Breast epithelium (tissue), 4 donors: ENCODE measurements at regions of chr15 and their contacts with region 1.

Region 1: GRCh38 chr15:88126695-88127431 is 129.7 kb downstream of the NTRK3 start:
- DNase-seq: no peak
- H3K4me3 ChIP-seq: no peak overlapping the region
- H3K27ac ChIP-seq: peak overlapping the region in 1 of 2 donors; percentile 74
- H3K4me1 ChIP-seq: no peaks in the 10 kb centered on the region
- H3K27me3 ChIP-seq: no peaks in the 10 kb centered on the region
- CTCF ChIP-seq: no peak
- POLR2A ChIP-seq: no peak

Region 2: DNA sequence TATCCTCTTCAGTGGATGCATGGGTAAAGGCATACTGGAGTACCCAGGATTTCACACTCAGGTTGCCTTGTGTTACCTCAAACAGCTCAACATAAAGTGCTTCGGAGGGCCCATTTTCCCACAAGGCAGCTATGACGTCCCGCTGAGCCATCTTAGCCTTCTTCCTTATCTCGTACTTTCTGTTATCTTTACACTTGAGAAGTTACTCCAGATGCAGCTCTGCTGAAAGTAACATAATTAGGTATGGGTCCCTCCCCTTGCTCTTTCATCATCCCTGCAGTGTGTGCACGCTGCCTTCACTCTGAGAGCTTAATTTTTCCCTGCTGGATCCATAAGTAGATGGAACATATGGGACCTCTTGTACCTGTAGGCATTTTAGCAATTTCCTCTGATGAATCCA is 1636.9 kb before region 1 on chr15:
- intact Hi-C with region 1: loop called (anchors 10 kb)
- DNase-seq: no peak
- H3K4me3 ChIP-seq: no peak overlapping the region
- H3K27ac ChIP-seq: no peak overlapping the region
- H3K4me1 ChIP-seq: no peaks in the 10 kb centered on the region
- H3K27me3 ChIP-seq: no peaks in the 10 kb centered on the region
- CTCF ChIP-seq: no peak
- POLR2A ChIP-seq: no peak

Region 3: DNA sequence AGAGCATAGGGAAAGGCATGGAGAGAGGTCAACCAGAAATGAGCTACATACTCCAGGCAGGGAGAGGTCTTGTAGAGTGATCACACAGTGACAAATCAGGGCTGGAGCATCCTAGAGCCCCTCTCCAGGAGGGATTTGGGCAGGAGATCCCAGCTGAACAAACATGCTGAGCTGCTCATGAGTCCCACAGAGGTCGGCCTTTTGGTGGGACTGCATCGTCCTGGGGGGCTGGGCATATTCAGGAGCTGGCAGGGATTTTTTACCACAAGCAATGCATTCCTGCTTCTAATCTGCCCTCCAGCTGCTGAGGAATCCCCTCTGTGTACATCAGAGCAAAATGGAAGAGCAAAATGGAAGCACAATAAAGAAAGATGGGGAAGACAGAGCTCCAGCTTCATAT is 34.8 kb after region 1 on chr15:
- intact Hi-C with region 1: no loop called
- DNase-seq: no peak
- H3K4me3 ChIP-seq: no peak overlapping the region
- H3K27ac ChIP-seq: no peak overlapping the region
- H3K4me1 ChIP-seq: no peaks in the 10 kb centered on the region
- H3K27me3 ChIP-seq: no peaks in the 10 kb centered on the region
- CTCF ChIP-seq: no peak
- POLR2A ChIP-seq: no peak

Region 4: GRCh38 chr15:88179562-88179961 is 52.7 kb after region 1 on chr15:
- intact Hi-C with region 1: no loop called
- DNase-seq: no peak
- H3K4me3 ChIP-seq: no peak overlapping the region
- H3K27ac ChIP-seq: no peak overlapping the region
- H3K4me1 ChIP-seq: no peaks in the 10 kb centered on the region
- H3K27me3 ChIP-seq: no peaks in the 10 kb centered on the region
- CTCF ChIP-seq: no peak
- POLR2A ChIP-seq: no peak